PC-9 (cell line): ENCODE measurements at regions of chr1 and their contacts with region 1.

Region 1: DNA sequence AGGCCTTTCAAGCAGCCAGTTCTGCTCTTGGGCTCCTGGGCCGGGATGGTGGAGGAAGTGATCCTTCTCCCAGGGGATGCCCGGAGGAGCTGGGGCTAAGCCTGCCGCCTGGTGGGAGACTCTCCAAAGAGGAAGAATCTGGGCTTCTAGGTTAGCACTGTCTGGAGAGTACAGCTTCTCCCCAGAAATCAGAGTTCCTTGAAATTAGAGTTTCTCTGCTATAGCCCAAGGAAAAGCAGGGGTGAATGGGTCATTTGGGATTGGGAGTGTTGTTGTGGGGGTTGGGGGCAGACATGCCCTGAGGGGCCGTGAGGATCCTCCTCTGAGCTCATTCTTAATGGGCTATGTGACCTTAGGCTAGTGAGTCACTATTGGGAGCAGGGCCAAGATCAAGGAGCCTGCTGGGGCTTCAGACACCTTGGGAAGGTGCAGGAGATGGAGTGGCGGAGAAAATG is 6.5 kb downstream of the LGR6 start:
- DNase-seq: peak; percentile 81 to 93
- H3K4me3 ChIP-seq: no peak overlapping the region
- H3K27ac ChIP-seq: peak overlapping the region; percentile 35; the same call in 1 of the 2 replicates
- H3K4me1 ChIP-seq: peaks cover 43% of the 10 kb centered on the region
- H3K27me3 ChIP-seq: no peaks in the 10 kb centered on the region
- CTCF ChIP-seq: no peak; the same call in 1 of the 2 replicates

Region 2: DNA sequence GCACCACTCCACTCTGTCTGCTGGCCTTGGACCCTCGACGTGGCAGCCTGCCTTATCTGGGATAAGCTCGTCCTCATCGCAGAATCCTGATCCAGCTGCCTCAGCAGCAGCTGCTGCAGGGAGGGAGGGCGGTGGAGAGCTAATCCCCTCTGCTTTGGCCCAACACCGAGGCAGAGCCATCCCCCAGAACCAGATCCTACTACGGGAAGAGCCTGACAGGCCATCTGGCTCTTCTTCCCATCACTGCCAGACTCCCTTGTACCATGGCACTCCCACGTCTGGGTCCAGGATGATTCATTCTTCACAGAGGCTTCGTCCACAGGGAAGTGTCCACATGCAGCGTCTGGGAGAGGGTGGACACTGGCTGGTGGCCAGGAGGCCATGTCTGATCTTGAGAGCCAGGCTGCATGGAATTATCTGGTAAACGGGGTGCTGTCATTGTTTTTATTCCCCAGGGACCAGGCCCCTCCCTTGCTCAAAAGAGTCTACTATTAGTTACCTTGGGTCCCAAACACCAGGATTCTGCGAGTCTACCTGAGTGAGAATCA is 931.5 kb before region 1 on chr1:
- CTCF ChIA-PET with region 1: no interaction called
- POLR2A ChIA-PET with region 1: no interaction called
- intact Hi-C with region 1: no loop called
- DNase-seq: no peak
- H3K4me3 ChIP-seq: no peak overlapping the region
- H3K27ac ChIP-seq: peak overlapping the region; percentile 87
- H3K4me1 ChIP-seq: peaks cover 41% of the 10 kb centered on the region
- H3K27me3 ChIP-seq: no peaks in the 10 kb centered on the region
- CTCF ChIP-seq: no peak

Region 3: DNA sequence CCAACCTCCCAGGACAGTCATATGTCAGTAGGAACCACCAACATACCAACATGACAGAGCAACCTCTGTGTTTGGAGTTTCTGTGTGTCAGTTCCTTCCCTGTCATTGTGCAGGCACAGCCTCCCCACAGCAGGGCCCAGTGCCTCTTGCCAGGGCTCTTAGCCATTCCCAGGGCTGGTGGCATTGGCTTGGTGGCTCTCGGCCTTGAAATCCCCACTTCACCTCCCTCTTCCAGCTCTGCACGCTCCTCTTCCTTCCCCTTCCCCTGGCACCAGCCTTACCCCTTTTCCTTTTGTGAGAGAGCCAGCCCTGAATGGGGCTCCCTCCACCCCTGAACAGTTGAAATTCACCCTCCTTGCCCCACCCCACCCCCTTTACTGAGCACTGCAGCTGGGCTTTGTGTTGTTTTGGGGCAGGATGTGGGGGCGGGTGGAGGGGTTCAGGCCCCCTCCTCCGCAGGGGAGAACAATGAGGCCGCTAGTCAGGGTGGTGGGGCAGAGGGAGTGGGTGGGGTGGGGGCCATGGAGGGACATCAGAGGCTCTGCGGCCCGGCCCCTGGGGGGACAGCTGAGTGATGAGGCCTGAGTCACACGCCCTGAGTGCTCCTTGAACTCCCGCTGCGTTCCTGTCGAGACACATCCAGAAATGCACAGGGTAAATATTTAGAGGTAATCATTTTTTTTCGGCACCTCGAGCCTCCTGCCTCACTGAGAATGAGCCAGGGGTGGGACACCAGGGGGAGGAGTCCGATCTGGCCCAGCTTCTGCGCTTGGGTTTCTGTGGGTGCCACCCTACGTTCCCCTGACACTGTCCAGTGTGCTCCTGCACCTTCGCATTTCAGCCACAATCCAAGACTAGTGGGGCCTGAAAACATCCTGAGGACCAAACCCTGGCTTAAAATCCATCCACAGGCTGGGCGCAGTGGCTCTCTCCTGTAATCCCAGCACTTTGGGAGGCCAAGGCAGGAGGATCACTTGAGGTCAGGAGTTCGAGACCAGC is 22.1 kb after region 1 on chr1:
- CTCF ChIA-PET with region 1: no interaction called
- POLR2A ChIA-PET with region 1: interaction called, 6 read pairs
- intact Hi-C with region 1: loop called (anchors 1 kb)
- DNase-seq: peak; percentile 73 to 74
- H3K4me3 ChIP-seq: 0 out of 2 replicates have a peak overlapping the region, but pooled peaks have one; percentile 15
- H3K27ac ChIP-seq: no peak overlapping the region
- H3K4me1 ChIP-seq: peaks cover 21% of the 10 kb centered on the region
- H3K27me3 ChIP-seq: peaks cover 16% of the 10 kb centered on the region; the same call in 1 of the 2 replicates
- CTCF ChIP-seq: no peak

Region 4: GRCh38 chr1:202235856-202236837 is 36.0 kb after region 1 on chr1:
- CTCF ChIA-PET with region 1: interaction called, 10 read pairs
- POLR2A ChIA-PET with region 1: no interaction called
- intact Hi-C with region 1: loop called (anchors 1 kb)
- DNase-seq: peak; percentile 92 to 96
- H3K4me3 ChIP-seq: peak overlapping the region; percentile 44; the same call in 1 of the 2 replicates
- H3K27ac ChIP-seq: peak overlapping the region; percentile 80
- H3K4me1 ChIP-seq: peaks cover 25% of the 10 kb centered on the region
- H3K27me3 ChIP-seq: no peaks in the 10 kb centered on the region
- CTCF ChIP-seq: peak; percentile 97

Region 5: GRCh38 chr1:202241376-202242079 is 41.4 kb after region 1 on chr1:
- CTCF ChIA-PET with region 1: interaction called, 10 read pairs
- POLR2A ChIA-PET with region 1: no interaction called
- intact Hi-C with region 1: loop called (anchors 1 kb)
- DNase-seq: peak; percentile 47 to 73
- H3K4me3 ChIP-seq: no peak overlapping the region
- H3K27ac ChIP-seq: no peak overlapping the region
- H3K4me1 ChIP-seq: peaks cover 20% of the 10 kb centered on the region
- H3K27me3 ChIP-seq: peaks cover 6% of the 10 kb centered on the region; the same call in 1 of the 2 replicates
- CTCF ChIP-seq: no peak

Region 6: GRCh38 chr1:202283379-202283844 is 83.3 kb after region 1 on chr1:
- CTCF ChIA-PET with region 1: no interaction called
- POLR2A ChIA-PET with region 1: no interaction called
- intact Hi-C with region 1: loop called (anchors 1 kb)
- DNase-seq: peak; percentile 88 to 91
- H3K4me3 ChIP-seq: no peak overlapping the region
- H3K27ac ChIP-seq: peak overlapping the region; percentile 39; the same call in 1 of the 2 replicates
- H3K4me1 ChIP-seq: peaks cover 39% of the 10 kb centered on the region
- H3K27me3 ChIP-seq: no peaks in the 10 kb centered on the region
- CTCF ChIP-seq: no peak

Region 7: DNA sequence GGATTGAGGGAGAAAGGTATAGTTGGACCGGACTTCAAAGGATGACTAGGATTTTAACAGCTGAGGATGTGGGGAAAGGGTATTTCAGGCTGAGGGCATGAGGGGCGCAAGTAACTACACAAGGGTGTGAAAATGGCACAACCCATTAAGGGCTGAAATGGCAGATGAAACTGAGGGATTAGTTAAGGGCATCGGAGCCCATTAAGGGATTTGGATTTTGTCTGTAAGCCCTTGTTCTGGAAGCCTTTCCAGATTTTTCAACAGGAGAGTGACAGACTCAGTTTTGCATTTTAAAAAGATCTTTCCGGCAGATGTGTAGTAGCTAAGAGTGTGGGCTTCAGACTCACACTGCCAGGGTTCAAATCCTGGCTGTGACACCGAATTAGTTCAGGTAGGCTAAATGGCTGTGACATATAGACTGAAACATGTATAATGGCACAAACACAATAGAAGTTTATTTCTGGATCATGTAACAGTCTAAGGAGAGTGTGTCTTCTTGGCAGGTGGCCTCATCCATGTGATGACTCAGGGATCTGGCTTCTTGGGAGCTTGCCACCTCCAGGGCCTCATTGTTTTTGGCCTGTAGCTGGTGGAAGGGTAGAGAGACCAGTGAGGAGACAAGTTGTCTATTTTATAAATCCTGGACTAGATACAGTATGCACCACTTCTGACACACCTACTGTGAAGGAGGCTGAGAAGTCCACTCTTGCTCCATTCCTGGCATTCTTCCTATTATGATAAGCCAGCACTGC is 92.0 kb after region 1 on chr1:
- CTCF ChIA-PET with region 1: no interaction called
- POLR2A ChIA-PET with region 1: interaction called, 4 read pairs
- intact Hi-C with region 1: loop called (anchors 2 kb)
- DNase-seq: peak; percentile 61 to 83
- H3K4me3 ChIP-seq: no peak overlapping the region
- H3K27ac ChIP-seq: no peak overlapping the region
- H3K4me1 ChIP-seq: peaks cover 17% of the 10 kb centered on the region
- H3K27me3 ChIP-seq: no peaks in the 10 kb centered on the region
- CTCF ChIP-seq: no peak

Region 8: DNA sequence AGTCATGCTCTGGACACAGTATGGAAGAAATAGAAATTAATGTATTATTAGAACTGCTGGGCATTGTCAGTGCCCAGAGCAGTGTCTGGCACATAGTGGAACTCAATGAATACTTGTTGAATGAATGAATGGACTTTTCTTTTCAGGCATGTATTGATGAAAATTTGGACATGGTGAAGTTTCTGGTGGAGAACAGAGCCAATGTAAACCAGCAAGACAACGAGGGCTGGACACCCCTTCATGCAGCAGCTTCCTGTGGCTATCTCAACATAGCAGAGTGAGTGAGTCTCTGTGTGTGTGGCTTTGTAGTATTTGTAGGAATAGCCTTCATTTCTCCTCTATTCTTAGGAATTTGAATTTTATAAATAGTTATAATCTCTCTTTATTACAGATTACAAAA is 216.5 kb after region 1 on chr1:
- CTCF ChIA-PET with region 1: no interaction called
- POLR2A ChIA-PET with region 1: no interaction called
- intact Hi-C with region 1: no loop called
- DNase-seq: no peak
- H3K4me3 ChIP-seq: no peak overlapping the region
- H3K27ac ChIP-seq: no peak overlapping the region
- H3K4me1 ChIP-seq: peaks cover 30% of the 10 kb centered on the region
- H3K27me3 ChIP-seq: no peaks in the 10 kb centered on the region
- CTCF ChIP-seq: no peak